Heart right ventricle (tissue), 16 donors: ENCODE measurements at regions of chr4 and their contacts with region 1.

Region 1: GRCh38 chr4:152039023-152039481 is 278.2 kb upstream of the GATB start:
- DNase-seq: peak in 1 of 2 donors; percentile 26
- ATAC-seq: peak in 7 of 8 donors; percentile 37 to 93 (median 78)
- H3K4me3 ChIP-seq: no peak overlapping the region
- H3K27ac ChIP-seq: peak overlapping the region; percentile 47 to 94 (median 82)
- H3K4me1 ChIP-seq: peaks cover 0 to 18% (median 4%) of the 10 kb centered on the region in 9 donors
- H3K27me3 ChIP-seq: no peaks in the 10 kb centered on the region
- CTCF ChIP-seq: no peak

Region 2: GRCh38 chr4:151690164-151690870 is 348.7 kb before region 1 on chr4:
- intact Hi-C with region 1: loop called in 1 of 10 experiments (anchors 5 kb)
- DNase-seq: no peak
- ATAC-seq: no peak
- H3K4me3 ChIP-seq: no peak overlapping the region
- H3K27ac ChIP-seq: peak overlapping the region in 9 of 10 donors; percentile 16 to 93 (median 82)
- H3K4me1 ChIP-seq: peaks cover 28 to 92% (median 52%) of the 10 kb centered on the region in 9 donors
- H3K27me3 ChIP-seq: no peaks in the 10 kb centered on the region
- CTCF ChIP-seq: no peak

Region 3: DNA sequence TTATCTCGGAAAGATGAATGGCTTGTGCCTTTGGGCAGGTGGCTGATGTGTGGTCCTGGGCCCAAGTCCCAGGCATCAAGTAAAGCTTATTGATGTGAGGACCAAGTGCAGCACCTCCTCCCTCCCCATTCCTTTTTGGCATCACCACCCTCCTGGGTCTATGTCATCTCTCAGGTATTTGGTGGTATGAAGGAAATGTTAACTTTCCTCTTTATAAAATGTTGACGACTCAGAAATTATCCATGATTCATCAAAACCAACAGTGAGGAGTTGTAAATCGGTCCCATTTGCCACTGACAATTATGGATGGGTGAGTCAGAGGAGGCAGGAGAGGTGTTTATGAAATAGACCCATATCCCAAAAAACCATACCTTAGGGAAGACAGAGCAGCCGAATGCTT is 48.9 kb before region 1 on chr4:
- intact Hi-C with region 1: loop called in 1 of 10 experiments (anchors 2 kb)
- DNase-seq: no peak
- ATAC-seq: no peak
- H3K4me3 ChIP-seq: no peak overlapping the region
- H3K27ac ChIP-seq: peak overlapping the region in 2 of 10 donors; percentile 47 to 63
- H3K4me1 ChIP-seq: peaks cover 0 to 24% (median 9%) of the 10 kb centered on the region in 9 donors
- H3K27me3 ChIP-seq: no peaks in the 10 kb centered on the region
- CTCF ChIP-seq: no peak

Region 4: DNA sequence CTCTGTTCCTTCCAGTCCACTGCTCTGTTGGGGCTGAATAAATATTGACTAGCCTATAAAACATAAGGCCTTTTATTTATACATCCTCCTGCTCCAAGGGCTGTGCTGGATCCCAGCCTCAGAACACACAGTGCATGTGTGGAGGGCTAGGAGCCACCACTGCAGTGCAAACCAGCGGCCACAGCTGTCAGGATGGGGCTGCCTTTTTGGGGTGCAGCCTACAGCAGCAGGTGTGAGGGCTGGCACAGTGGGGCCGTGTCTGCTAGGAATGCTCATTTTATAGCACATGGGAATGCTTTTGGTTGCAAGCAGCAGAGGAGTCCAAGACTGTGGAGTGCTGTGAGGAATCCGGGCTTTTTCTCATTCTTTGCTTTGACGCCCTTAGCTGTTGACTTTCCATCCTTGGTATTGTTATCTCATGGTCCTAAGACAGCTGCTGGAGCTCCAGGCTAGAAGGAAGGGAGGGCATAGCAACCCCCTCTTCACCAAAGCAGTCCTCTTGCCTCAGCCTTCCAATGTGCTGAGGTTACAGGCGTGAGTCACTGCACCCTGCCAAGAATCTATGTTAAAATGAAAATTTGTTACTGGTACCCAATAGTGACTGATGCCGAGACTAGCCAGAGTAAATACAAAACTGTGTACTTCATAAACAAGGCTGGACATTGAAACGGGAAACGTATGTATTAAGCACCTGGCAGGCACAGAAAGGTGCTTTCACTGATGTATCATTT is 56.1 kb after region 1 on chr4:
- intact Hi-C with region 1: loop called in 1 of 10 experiments (anchors 5 kb)
- DNase-seq: no peak
- ATAC-seq: no peak
- H3K4me3 ChIP-seq: no peak overlapping the region
- H3K27ac ChIP-seq: no peak overlapping the region
- H3K4me1 ChIP-seq: peaks cover 0 to 19% (median 9%) of the 10 kb centered on the region in 9 donors
- H3K27me3 ChIP-seq: no peaks in the 10 kb centered on the region
- CTCF ChIP-seq: no peak